Adrenal gland (tissue), 19 donors: ENCODE measurements at regions of chr4 and their contacts with region 1.

Region 1: DNA sequence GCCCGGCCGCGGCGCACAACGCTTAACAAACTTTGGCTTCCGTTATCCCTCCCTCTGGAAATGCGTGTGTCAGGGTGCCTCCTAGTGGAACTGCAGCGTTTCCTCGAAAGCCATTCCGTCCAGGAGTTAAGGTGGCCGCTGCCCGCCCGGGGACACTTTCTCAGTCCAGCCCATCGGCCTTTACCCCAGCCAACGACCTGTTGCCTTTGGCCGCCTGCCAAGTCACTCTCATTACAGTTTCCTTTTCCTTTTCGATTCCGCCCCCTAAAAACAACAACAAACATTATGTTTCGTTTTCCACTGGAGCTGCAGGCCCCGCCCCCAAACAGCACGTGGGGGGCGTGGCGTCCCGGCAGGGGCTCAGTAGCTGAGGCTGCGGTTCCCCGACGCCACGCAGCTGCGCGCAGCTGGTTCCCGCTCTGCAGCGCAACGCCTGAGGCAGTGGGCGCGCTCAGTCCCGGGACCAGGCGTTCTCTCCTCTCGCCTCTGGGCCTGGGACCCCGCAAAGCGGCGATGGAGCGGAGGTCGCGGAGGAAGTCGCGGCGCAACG is at the start of gene HERC5:
- DNase-seq: peak; percentile 93 to 97 (median 97)
- H3K4me3 ChIP-seq: peak within 1 kb of the TSS; percentile 50 to 87 (median 71)
- H3K27ac ChIP-seq: peak within 1 kb of the TSS; percentile 26 to 88 (median 85)
- H3K4me1 ChIP-seq: peaks cover 0 to 7% of the 10 kb centered on the region in 2 donors
- H3K27me3 ChIP-seq: no peaks in the 10 kb centered on the region
- CTCF ChIP-seq: peak; percentile 31 to 81 (median 66)
- POLR2A ChIP-seq: peak; percentile 48 to 89
- total RNA-seq, gene HERC5: 3.3 to 9.9 (median 7.0) TPM

Region 2: GRCh38 chr4:88291003-88291402 is 165.8 kb before region 1 on chr4:
- intact Hi-C with region 1: loop called in 1 of 2 experiments (anchors 10 kb)
- DNase-seq: peak in 2 of 7 donors; percentile 9 to 57
- H3K4me3 ChIP-seq: no peak overlapping the region
- H3K27ac ChIP-seq: no peak overlapping the region
- H3K4me1 ChIP-seq: no peaks in the 10 kb centered on the region
- H3K27me3 ChIP-seq: no peaks in the 10 kb centered on the region
- CTCF ChIP-seq: no peak
- POLR2A ChIP-seq: no peak

Region 3: DNA sequence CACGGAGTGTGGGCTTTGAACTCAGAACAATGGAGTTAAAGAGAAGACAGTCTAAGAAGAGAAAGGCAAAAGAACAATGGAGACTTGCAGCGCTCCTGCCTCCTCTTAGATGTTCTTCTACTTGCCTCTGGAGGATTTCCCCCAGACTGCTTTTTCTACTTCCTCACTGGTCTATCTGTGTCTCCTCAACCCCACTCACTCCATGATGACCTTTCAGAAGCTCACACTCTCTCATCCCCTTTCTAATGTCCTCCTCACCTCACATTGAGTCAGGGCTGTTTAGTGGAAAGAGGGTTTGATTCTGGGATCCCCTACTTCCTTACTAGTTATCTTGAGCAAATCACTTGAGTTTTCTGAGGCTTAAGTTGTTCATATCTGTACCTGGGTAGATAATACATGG is 90.4 kb before region 1 on chr4:
- intact Hi-C with region 1: loop called (anchors 5 to 10 kb)
- DNase-seq: no peak
- H3K4me3 ChIP-seq: no peak overlapping the region
- H3K27ac ChIP-seq: no peak overlapping the region
- H3K4me1 ChIP-seq: no peaks in the 10 kb centered on the region
- H3K27me3 ChIP-seq: no peaks in the 10 kb centered on the region
- CTCF ChIP-seq: no peak
- POLR2A ChIP-seq: no peak

Region 4: GRCh38 chr4:88378691-88379559 is 77.9 kb before region 1 on chr4 and contains the start of gene HERC6:
- intact Hi-C with region 1: loop called (anchors 5 to 10 kb)
- DNase-seq: peak; percentile 79 to 94 (median 87)
- H3K4me3 ChIP-seq: peak within 1 kb of the TSS; percentile 69 to 100 (median 84)
- H3K27ac ChIP-seq: peak within 1 kb of the TSS; percentile 87 to 100 (median 94)
- H3K4me1 ChIP-seq: peaks cover 0 to 3% of the 10 kb centered on the region in 2 donors
- H3K27me3 ChIP-seq: no peaks in the 10 kb centered on the region
- CTCF ChIP-seq: peak; percentile 47 to 89 (median 73)
- POLR2A ChIP-seq: peak in 1 of 2 donors; percentile 40
- total RNA-seq, gene HERC6: 4.1 to 15.9 (median 12.4) TPM

Region 5: GRCh38 chr4:88706574-88706973 is 249.7 kb after region 1 on chr4:
- intact Hi-C with region 1: no loop called
- DNase-seq: peak; percentile 39 to 74 (median 49)
- H3K4me3 ChIP-seq: no peak overlapping the region
- H3K27ac ChIP-seq: peak overlapping the region in 1 of 5 donors; percentile 45
- H3K4me1 ChIP-seq: peaks cover 0 to 9% of the 10 kb centered on the region in 2 donors
- H3K27me3 ChIP-seq: no peaks in the 10 kb centered on the region
- CTCF ChIP-seq: peak; percentile 53 to 81 (median 70)
- POLR2A ChIP-seq: no peak

Region 6: DNA sequence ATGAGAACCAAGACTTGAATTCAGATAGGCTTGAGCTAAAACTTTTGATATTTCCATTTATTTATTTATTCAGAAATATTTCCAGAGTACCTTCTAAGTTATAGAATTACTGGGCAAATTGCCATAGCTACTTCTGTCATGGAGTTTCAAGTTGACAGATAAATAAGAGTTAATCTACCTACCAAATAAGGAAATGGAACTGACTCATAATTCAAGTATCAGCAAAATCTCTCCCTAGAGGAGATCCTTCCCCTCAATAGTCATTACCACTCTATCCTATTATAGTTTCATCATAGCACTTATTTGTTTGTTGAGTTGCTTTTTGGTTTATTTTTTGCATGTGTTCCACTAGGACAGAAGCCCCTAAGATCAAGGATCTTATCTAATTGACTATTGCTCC is 1621.6 kb after region 1 on chr4:
- intact Hi-C with region 1: no loop called
- DNase-seq: no peak
- H3K4me3 ChIP-seq: no peak overlapping the region
- H3K27ac ChIP-seq: peak overlapping the region in 1 of 5 donors; percentile 36
- H3K4me1 ChIP-seq: no peaks in the 10 kb centered on the region
- H3K27me3 ChIP-seq: no peaks in the 10 kb centered on the region
- CTCF ChIP-seq: no peak
- POLR2A ChIP-seq: no peak